PC-9 (cell line): ENCODE measurements at regions of chr12 and their contacts with region 1.

Region 1: GRCh38 chr12:121159467-121160307 is 27.0 kb downstream of the P2RX7 start:
- DNase-seq: no peak
- H3K4me3 ChIP-seq: no peak overlapping the region
- H3K27ac ChIP-seq: no peak overlapping the region
- H3K4me1 ChIP-seq: no peaks in the 10 kb centered on the region
- H3K27me3 ChIP-seq: no peaks in the 10 kb centered on the region
- CTCF ChIP-seq: no peak

Region 2: GRCh38 chr12:120388691-120389481 is 770.8 kb before region 1 on chr12:
- CTCF ChIA-PET with region 1: interaction called, 10 read pairs
- POLR2A ChIA-PET with region 1: no interaction called
- intact Hi-C with region 1: no loop called
- DNase-seq: no peak
- H3K4me3 ChIP-seq: no peak overlapping the region
- H3K27ac ChIP-seq: no peak overlapping the region
- H3K4me1 ChIP-seq: peaks cover 2% of the 10 kb centered on the region
- H3K27me3 ChIP-seq: no peaks in the 10 kb centered on the region
- CTCF ChIP-seq: no peak

Region 3: GRCh38 chr12:121095544-121096198 is 64.0 kb before region 1 on chr12:
- CTCF ChIA-PET with region 1: interaction called, 10 read pairs
- POLR2A ChIA-PET with region 1: no interaction called
- intact Hi-C with region 1: no loop called
- DNase-seq: peak in 1 of 2 experiments; percentile 60
- H3K4me3 ChIP-seq: peak overlapping the region; percentile 50
- H3K27ac ChIP-seq: no peak overlapping the region
- H3K4me1 ChIP-seq: no peaks in the 10 kb centered on the region
- H3K27me3 ChIP-seq: peaks cover 14% of the 10 kb centered on the region; the same call in 1 of the 2 replicates
- CTCF ChIP-seq: peak; percentile 73

Region 4: DNA sequence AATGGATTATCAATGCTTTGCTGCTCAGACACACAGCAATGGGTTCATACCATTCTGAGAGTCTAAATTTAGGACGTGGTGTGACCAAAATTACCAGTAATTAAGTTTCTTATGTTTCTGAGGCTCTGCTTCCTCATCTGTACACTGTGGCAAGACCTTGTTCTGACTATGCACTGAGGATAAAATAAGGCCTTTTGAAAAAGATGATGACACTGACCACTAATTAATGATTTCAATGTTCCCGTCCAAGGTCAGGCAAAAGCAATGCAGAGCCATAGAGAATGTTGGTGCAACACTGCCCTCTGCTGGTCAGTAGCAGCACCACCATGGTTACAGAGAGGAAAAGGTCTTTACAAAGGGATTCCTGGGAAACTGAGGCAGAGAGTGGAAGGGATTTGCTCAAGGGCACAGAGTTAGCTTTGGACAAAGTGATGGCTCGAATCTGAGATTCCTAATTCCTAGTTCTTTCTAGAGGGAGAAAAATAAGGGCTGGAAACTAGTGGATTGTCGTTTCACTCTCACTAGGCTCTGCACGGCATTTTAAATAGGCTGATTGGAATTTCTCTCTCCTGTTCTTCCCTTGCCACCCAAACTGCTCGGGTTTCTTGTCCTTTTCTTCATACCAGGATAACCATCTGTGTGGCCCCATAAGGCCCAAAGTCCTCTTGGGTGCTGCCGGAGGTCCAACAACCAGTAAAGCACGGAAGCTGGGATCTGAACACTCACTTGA is 49.3 kb before region 1 on chr12:
- CTCF ChIA-PET with region 1: no interaction called
- POLR2A ChIA-PET with region 1: no interaction called
- intact Hi-C with region 1: no loop called
- DNase-seq: peak; percentile 38 to 52
- H3K4me3 ChIP-seq: no peak overlapping the region
- H3K27ac ChIP-seq: no peak overlapping the region
- H3K4me1 ChIP-seq: peaks cover 7% of the 10 kb centered on the region
- H3K27me3 ChIP-seq: no peaks in the 10 kb centered on the region
- CTCF ChIP-seq: peak; percentile 97

Region 5: DNA sequence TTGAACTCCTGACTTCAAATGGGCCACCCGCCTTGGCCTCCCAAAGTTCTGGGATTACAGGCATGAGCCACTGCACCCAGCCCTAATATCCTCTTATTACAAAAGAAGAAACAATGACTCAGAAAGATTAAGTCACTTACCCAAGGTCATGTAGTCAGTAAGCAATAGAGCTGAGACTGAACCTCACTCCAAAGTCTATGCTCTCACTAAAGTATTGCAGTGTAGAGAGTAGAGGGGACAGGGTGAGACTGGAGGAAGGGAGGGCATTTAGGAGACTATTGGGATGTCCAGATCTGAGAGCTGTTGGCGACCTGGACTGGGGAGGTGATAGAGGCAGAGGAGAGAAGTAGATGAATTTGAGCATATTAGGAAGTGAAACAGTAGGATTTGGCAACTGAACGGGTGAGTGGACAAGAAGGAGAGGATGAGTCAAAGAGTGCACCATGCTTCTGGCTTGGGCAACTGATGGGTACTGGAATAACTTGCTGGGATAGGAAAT is 15.2 kb before region 1 on chr12:
- CTCF ChIA-PET with region 1: no interaction called
- POLR2A ChIA-PET with region 1: interaction called, 37 read pairs
- intact Hi-C with region 1: no loop called
- DNase-seq: peak in 1 of 2 experiments; percentile 55
- H3K4me3 ChIP-seq: no peak overlapping the region
- H3K27ac ChIP-seq: peak overlapping the region; percentile 70
- H3K4me1 ChIP-seq: peaks cover 18% of the 10 kb centered on the region
- H3K27me3 ChIP-seq: no peaks in the 10 kb centered on the region
- CTCF ChIP-seq: no peak

Region 6: DNA sequence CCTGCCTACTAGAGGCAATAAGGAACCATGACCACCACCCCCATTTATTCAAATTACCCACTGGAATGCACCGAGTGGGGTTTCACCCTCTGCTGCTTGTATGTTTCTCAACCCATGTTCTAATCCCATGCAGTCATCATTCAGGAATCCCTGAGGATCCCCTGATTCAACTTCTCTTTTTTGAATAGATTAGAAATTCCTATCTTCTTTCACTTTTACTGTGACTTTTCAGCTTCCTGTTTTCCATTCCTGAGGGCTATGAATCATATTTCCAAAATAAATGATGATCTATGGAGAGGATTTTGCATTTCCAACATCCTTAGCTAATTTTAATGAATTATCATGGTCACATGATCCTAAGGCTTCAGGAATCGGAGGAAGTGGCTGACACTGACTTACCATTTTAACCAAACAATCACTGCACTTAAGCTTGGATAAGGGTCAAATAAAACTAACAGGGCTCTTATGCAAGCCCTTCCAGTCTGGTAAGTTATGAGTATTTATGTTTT is 30.9 kb after region 1 on chr12:
- CTCF ChIA-PET with region 1: no interaction called
- POLR2A ChIA-PET with region 1: no interaction called
- intact Hi-C with region 1: no loop called
- DNase-seq: peak; percentile 11 to 73
- H3K4me3 ChIP-seq: no peak overlapping the region
- H3K27ac ChIP-seq: peak overlapping the region; percentile 44
- H3K4me1 ChIP-seq: peaks cover 11% of the 10 kb centered on the region
- H3K27me3 ChIP-seq: no peaks in the 10 kb centered on the region
- CTCF ChIP-seq: no peak